ENCODE measurements at regions of chr17 and their contacts with region 1.

Region 1: GRCh38 chr17:37818689-37819088 is 73.8 kb upstream of the HNF1B start:
- DNase-seq: peak in 1 of 7 donors; percentile 42
- H3K4me3 ChIP-seq: no peak overlapping the region
- H3K27ac ChIP-seq: no peak overlapping the region
- H3K4me1 ChIP-seq: peaks cover 3 to 7% of the 10 kb centered on the region in 2 donors
- H3K27me3 ChIP-seq: peaks cover 3% of the 10 kb centered on the region
- CTCF ChIP-seq: no peak
- POLR2A ChIP-seq: no peak

Region 2: DNA sequence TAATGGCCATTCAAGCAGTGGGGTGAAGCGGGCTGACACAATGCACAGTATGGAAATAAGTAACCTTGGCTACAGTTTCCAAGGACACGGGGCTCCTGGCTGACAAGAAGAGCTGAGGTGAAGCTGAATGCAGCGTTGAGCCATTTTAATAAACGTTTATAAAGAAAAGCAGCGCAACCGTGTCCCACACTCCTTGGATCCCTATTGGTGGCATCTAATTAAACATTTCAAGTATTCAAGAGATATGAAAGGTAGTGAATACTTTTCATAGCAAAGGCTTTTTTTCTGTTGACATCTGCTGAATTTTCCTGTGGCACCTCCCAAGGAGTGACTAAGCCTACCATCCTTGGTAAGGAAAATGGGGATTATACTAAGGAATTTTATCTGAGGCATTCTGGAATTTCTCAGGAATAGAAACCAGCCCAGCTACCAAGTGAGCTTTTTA is 302.5 kb before region 1 on chr17:
- intact Hi-C with region 1: no loop called
- DNase-seq: peak in 1 of 7 donors; percentile 27
- H3K4me3 ChIP-seq: no peak overlapping the region
- H3K27ac ChIP-seq: peak overlapping the region in 1 of 5 donors; percentile 1
- H3K4me1 ChIP-seq: peaks cover 0 to 14% of the 10 kb centered on the region in 2 donors
- H3K27me3 ChIP-seq: no peaks in the 10 kb centered on the region
- CTCF ChIP-seq: no peak
- POLR2A ChIP-seq: no peak

Region 3: GRCh38 chr17:37648555-37648954 is 170.1 kb before region 1 on chr17:
- intact Hi-C with region 1: loop called in 1 of 2 experiments (anchors 5 kb)
- DNase-seq: no peak
- H3K4me3 ChIP-seq: no peak overlapping the region
- H3K27ac ChIP-seq: no peak overlapping the region
- H3K4me1 ChIP-seq: peaks cover 4 to 5% of the 10 kb centered on the region in 2 donors
- H3K27me3 ChIP-seq: peaks cover 5% of the 10 kb centered on the region
- CTCF ChIP-seq: no peak
- POLR2A ChIP-seq: no peak